Activated B cell treated with CpG ODN at 0.5 μM for 24 hours (primary cell): ENCODE measurements at regions of chr1 and their contacts with region 1.

Region 1: DNA sequence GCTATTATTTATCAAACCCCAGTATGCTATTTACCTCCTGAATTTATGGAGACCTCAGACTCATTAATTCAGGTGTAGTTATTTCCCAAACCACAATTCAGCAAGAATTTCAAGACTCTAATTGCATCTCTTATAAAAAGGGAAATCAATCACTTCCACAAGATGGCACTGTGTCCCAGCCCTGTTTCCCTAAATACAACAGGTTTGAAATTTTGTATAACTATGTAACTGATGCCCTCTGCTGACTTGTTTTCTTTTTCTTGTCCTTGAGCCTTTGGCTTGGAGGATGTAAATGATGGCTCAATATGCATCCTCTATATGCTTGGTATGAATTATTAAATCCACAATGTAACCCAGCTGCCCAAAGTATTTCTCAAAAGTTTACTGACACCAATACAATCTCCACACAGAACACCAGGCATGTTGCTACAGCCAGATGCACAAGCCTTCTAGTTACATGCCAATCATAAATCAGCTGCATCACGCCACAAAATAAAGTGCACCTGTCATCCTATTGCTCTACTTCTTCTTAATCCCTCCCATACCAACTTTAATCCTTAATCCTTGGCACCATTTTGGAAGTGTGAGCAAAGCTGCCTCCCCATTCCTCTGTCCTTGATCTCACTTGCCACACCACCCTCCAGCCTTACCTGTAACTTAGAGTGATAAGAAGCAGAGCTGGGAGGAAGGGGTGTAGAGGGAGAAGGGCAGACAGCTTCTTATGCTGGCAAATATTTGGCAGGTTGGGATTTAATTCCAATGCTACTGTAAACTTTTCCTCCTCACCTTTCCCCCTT is 9.0 kb downstream of the C1orf105 start:
- DNase-seq: no peak
- ATAC-seq: peak; percentile 67
- H3K4me3 Mint-ChIP-seq: no peak overlapping the region
- H3K27ac Mint-ChIP-seq: no peak overlapping the region
- H3K4me1 Mint-ChIP-seq: peaks cover 13% of the 10 kb centered on the region
- H3K27me3 Mint-ChIP-seq: no peaks in the 10 kb centered on the region
- CTCF ChIP-seq: no peak

Region 2: GRCh38 chr1:171801487-171801891 is 628.0 kb before region 1 on chr1:
- CTCF ChIA-PET with region 1: interaction called, 5 read pairs
- POLR2A ChIA-PET with region 1: no interaction called
- intact Hi-C with region 1: loop called (anchors 1 kb)
- DNase-seq: no peak
- ATAC-seq: no peak
- H3K4me3 Mint-ChIP-seq: no peak overlapping the region
- H3K27ac Mint-ChIP-seq: no peak overlapping the region
- H3K4me1 Mint-ChIP-seq: peaks cover 15% of the 10 kb centered on the region
- H3K27me3 Mint-ChIP-seq: no peaks in the 10 kb centered on the region
- CTCF ChIP-seq: no peak

Region 3: DNA sequence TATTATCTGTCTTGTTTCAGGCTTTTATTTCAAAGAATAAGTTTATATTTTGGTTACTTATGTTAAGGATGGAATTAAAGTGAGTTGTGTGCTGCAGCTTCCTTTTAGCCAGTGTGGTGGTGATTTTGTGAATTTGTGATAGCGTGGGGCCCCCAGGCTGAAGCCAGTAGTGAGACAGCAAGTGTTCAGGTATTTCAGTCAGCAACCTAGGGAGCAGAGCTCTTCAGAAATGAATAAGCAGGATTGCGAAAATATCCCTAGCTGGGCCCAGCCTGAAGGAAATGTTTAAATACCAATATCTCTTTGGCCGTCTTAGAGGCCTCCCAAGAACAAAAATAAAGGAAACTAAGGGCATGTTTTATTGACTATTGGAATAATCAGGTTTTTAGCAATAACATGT is 159.9 kb before region 1 on chr1:
- CTCF ChIA-PET with region 1: no interaction called
- POLR2A ChIA-PET with region 1: no interaction called
- intact Hi-C with region 1: no loop called
- DNase-seq: no peak
- ATAC-seq: no peak
- H3K4me3 Mint-ChIP-seq: no peak overlapping the region
- H3K27ac Mint-ChIP-seq: no peak overlapping the region
- H3K4me1 Mint-ChIP-seq: peaks cover 4% of the 10 kb centered on the region
- H3K27me3 Mint-ChIP-seq: no peaks in the 10 kb centered on the region
- CTCF ChIP-seq: no peak

Region 4: DNA sequence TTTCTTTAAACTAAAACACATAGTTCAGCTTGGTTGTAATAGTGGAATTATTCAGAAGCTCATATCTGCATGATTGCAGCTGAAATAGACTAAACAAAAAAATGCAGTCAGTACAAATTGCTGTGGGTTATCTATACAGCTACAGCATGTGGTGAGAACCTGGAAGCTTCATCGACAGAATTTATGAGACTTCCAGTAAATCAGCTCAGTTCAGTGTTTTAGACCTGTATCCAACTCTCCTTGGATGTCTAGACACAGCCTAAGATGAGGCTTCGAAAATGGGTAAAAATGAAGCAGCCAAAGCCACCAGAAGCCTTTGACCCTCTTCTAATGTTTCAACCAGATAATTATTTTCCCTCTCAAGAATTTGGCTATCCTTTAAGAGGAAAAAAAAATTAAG is 136.1 kb before region 1 on chr1:
- CTCF ChIA-PET with region 1: no interaction called
- POLR2A ChIA-PET with region 1: no interaction called
- intact Hi-C with region 1: no loop called
- DNase-seq: no peak
- ATAC-seq: no peak
- H3K4me3 Mint-ChIP-seq: no peak overlapping the region
- H3K27ac Mint-ChIP-seq: no peak overlapping the region
- H3K4me1 Mint-ChIP-seq: no peaks in the 10 kb centered on the region
- H3K27me3 Mint-ChIP-seq: no peaks in the 10 kb centered on the region
- CTCF ChIP-seq: no peak

Region 5: DNA sequence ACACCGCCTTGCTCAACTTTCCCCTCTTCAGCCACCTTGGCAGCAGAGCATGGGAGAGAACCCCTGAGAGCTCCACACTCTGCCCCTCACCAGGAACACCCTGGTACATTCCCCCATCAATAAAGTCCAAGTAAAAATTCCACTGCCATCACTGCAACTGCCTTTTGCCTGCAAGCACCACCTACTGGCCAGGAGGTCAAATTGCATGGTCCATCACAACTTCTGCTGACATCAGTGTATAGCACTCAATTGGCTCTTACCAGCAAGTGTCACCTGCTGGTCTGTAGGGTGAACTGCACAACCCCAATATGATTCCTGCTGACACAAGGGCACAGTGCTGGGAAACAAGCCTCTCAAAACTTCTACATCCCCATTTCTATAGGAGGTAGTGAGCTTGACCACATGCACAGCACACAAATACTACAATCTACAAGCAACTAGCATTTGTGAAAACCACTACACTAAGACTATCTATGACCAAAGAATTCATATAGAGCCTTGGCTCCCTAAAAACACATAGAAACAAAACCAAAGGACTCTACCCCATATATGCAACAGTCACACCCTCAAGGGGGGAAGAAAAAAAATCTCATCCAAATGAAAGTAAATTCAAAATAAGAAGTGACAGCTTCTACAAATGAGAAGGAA is 298.6 kb after region 1 on chr1:
- CTCF ChIA-PET with region 1: no interaction called
- POLR2A ChIA-PET with region 1: no interaction called
- intact Hi-C with region 1: no loop called
- DNase-seq: no peak
- ATAC-seq: peak; percentile 78
- H3K4me3 Mint-ChIP-seq: no peak overlapping the region
- H3K27ac Mint-ChIP-seq: no peak overlapping the region
- H3K4me1 Mint-ChIP-seq: peaks cover 14% of the 10 kb centered on the region
- H3K27me3 Mint-ChIP-seq: no peaks in the 10 kb centered on the region
- CTCF ChIP-seq: no peak

Region 6: DNA sequence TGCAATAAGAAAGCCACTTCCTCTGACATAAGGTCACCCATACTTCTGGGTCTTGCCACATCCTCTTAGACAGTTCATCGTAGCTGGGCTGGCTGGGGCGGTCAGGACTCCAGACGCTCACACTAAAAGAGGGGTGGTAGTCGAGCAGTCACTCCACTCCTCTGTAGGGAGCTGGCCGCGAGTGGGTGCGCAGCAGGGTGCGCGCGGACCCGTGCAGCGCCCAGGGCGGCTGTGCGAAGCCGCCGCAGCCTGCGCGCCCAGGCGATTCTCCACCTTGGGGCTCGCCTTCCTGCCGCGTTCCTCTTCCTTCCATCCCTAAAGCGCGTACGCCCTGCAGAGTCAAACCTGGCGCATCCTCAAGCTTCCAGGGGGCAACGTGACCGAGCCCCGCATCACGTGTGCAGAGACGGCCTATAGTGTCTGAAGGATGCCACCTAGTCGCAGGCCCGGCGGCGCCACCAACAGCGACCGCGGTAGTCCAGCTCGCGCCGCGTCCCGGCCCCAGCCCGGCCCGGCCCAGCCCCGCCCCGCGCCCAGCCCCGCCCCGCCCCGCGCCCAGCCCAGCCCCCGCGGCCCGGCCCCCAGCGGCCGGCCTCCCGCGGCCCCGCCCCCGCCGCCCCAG is 1047.2 kb after region 1 on chr1:
- CTCF ChIA-PET with region 1: no interaction called
- POLR2A ChIA-PET with region 1: no interaction called
- intact Hi-C with region 1: no loop called
- DNase-seq: peak; percentile 70
- ATAC-seq: peak; percentile 94
- H3K4me3 Mint-ChIP-seq: peak overlapping the region; percentile 92
- H3K27ac Mint-ChIP-seq: peak overlapping the region; percentile 95
- H3K4me1 Mint-ChIP-seq: peaks cover 40% of the 10 kb centered on the region
- H3K27me3 Mint-ChIP-seq: no peaks in the 10 kb centered on the region
- CTCF ChIP-seq: no peak